ENCODE measurements at regions of chr2 and their contacts with region 1.

Region 1: DNA sequence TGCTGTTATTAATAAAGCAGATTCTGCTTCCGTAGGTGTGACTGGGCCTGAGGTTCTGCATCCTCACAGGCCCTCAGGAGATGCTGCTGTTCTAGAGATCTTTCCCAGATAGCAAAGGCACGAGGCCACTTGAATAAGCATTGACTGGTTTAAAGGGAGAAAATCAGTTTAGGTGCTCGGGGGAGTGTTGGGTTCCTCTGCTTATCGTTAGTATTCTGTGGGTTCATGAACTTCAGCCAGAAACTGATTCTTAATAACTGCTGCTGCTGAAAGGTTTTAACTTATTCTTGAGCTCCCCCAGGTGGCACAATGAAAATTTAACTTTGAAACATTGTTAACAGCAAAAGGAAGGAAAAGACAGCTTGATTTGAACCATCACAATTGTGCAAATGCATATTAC is 56.9 kb downstream of the ITGA6 start:
- DNase-seq: no peak
- H3K4me3 Mint-ChIP-seq: no peak overlapping the region
- H3K27ac Mint-ChIP-seq: no peak overlapping the region
- H3K4me1 Mint-ChIP-seq: peaks cover 20% of the 10 kb centered on the region
- H3K27me3 Mint-ChIP-seq: no peaks in the 10 kb centered on the region

Region 2: GRCh38 chr2:172496160-172496608 is 11.9 kb after region 1 on chr2:
- CTCF ChIA-PET with region 1: interaction called, 15 read pairs
- POLR2A ChIA-PET with region 1: interaction called, 3 read pairs
- DNase-seq: peak; percentile 24
- H3K4me3 Mint-ChIP-seq: peak overlapping the region; percentile 31
- H3K27ac Mint-ChIP-seq: peak overlapping the region; percentile 83
- H3K4me1 Mint-ChIP-seq: peaks cover 21% of the 10 kb centered on the region
- H3K27me3 Mint-ChIP-seq: no peaks in the 10 kb centered on the region

Measured in activated CD4-positive, alpha-beta memory T cell treated with anti-CD3 and anti-CD28 coated beads, Interleukin-2, amount 10 ng/mL, durations not matched to agents 7 days and 5 days (primary cell).